Posterior vena cava (tissue), 2 donors: ENCODE measurements at regions of chr18 and their contacts with region 1.

Region 1: DNA sequence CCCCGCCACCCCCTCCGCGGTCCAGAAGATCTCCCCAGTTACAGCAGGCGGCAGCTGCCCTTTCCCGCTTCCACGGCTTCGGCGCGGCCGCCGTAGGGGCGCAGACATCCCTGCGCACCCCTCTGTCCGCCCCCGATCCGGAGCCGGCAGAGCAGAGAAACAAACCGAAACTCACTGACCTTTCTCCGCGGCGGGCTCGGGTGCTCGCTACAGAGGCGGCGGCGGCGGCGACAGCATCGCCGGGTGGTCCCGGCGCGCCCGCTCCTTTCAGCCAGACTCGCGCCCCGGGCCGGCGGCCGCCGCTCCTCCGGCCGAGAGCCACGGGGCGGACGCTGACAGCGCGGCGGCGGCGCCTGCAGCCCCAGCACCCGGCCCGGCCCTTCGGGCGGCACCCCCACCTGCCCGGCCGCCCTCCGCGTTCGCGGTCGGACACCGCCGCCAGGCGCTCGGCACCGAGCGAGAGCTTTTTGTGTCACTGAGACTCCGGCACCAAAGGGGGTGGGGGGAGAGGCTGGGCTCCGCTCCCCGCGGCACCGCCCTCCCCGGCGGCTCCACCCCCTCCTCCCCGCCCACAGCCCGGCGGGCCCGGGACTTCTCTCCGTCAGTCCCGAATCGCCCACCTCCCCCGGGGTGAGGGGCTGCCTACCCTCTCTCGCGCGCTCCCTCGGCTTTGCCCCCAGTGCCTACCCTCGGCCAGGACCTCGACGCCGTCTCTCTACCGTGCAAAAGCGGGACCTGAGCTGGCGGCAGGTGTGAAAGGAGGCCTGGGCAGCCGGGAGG is 1.4 kb upstream of the RNF152 start:
- DNase-seq: peak; percentile 93

Region 2: GRCh38 chr18:61581578-61582201 is 312.5 kb before region 1 on chr18:
- intact Hi-C with region 1: loop called (anchors 10 kb)
- DNase-seq: peak; percentile 91

Region 3: GRCh38 chr18:61635901-61636528 is 258.1 kb before region 1 on chr18:
- intact Hi-C with region 1: loop called (anchors 5 kb)
- DNase-seq: no peak

Region 4: GRCh38 chr18:61738488-61738887 is 155.7 kb before region 1 on chr18:
- intact Hi-C with region 1: loop called in 1 of 2 experiments (anchors 10 kb)
- DNase-seq: no peak

Region 5: DNA sequence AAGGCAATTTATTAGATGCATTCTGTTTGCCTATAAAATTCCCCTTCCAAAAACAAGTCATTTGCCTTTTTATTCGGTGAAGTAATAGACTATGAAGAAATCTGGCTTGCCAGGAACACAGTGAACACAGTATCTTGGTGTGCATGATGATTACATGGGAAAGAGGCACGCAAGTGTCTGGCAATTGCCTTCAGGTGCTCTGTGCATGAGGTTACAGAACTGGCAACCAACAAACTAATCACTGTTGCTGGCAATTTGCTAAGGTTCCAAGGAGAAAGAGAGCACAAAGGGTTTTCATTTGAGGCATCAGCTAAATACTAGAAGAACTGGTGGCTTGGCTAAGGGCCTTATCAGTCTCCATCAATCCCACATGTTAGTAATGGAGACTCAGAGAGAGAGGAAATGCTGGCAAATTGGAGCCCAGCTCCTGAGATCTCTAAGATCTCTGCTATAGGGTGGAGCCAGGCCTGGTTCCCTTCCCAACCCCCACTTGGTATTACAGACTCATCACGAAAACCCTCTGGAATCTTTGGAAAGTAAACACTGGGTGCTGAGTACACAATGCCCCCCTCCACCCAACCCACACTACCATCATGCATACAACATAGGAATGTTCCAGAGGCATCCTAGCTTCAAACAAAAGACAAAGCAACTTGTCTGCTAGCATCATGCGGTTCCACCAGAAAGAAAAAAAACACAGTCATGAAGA is 11.7 kb before region 1 on chr18:
- intact Hi-C with region 1: no loop called
- DNase-seq: no peak

Region 6: DNA sequence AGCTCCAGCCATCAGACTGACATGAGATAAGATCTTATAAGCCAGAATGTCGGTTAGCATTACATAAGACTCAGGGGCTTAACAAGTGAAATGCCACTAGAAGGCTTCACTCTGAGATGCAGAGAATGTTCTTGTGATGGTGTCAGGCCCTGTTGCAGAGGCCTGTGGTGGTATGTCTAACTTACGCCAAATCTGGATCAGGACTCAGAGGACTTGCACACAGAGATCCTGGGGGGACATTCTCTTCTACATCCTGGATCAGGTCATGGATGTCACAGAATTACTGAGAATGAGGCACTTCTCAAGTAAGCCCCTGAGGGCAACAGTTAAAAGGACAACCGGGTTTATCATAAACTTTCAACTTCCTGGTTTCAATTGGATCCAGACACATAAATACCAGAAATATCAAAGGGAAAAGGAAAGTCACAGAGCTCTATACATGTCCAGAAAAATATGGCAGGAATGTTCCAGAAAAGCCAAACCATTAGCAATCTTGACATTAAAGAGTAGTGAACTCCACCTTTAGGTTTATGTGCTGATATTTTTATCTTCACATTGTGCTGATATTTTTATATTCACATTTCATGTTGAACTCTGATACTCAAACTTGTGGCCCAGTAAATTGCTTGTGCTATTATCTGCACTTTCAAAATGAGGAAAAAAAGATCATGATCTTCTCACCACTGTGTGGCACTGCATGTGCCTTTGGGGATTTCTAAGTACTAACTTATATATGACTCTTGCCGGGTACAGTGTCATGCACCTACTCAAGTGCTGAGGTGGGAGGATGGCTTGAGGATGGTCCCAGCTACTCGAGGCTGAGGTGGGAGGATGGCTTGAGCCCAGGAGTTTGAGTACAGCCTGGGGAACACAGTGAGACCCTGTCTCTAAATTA is 136.2 kb after region 1 on chr18:
- intact Hi-C with region 1: no loop called
- DNase-seq: no peak